ENCODE measurements at regions of chr2 and their contacts with region 1.

Region 1: DNA sequence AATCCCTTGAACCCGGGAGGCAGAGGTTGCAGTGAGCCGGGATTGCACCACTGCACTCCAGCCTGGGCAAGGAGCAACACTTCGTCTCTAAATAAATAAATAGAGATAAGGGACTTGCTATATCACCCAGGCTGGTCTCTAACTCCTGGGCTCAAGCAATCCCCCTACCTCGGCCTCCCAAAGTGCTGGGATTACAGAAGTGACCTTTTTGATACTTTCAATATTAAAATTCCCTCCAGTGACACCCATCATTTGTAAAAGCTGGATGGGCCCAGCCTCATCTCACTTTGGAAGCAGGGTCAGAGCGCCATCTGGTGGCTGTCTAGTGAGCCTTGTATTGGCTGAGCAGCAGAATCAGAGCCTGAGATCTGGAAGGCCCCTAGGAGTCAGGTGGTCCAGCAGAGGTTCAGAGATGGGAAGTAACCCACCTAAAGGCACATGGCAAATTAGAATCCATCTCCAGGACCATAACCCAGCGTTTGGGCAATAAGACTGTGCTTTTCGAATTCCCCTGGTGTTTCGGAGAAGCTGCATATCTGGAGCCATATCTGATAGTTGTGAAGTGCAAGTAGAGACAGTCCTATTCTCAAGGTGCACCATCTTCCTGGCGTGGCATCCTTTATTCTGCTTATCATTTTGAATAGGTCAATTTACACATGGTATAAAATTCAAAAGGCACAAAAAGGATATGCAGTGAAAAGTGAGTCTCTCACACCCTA is 18.3 kb upstream of the SLC35F6 start:
- DNase-seq: peak; percentile 86
- H3K4me3 ChIP-seq: no peak overlapping the region
- H3K27ac ChIP-seq: no peak overlapping the region
- H3K4me1 ChIP-seq: peaks cover 14% of the 10 kb centered on the region
- H3K27me3 ChIP-seq: no peaks in the 10 kb centered on the region
- CTCF ChIP-seq: peak; percentile 93

Region 2: DNA sequence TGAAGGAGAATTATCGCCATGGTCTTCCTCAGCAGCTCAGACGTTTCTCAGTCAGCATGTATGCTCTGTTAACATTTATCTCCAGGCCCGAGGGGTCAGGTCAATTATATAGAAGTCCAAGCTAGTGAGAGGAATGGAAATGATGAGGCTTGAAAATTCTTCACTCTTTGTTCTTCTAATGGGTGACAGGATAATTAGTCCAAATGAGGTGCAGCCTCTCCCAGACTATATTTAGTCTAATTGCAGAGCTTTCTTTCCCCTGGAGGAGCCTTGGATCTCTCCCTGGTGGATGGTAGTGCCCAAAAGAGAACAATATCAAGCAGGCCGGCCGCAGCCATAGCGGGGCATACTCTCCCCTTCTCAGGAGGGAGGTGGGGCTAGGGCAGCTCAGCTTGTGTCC is 1021.0 kb before region 1 on chr2:
- CTCF ChIA-PET with region 1: no interaction called
- POLR2A ChIA-PET with region 1: interaction called, 11 read pairs
- intact Hi-C with region 1: no loop called
- DNase-seq: no peak
- H3K4me3 ChIP-seq: no peak overlapping the region
- H3K27ac ChIP-seq: no peak overlapping the region
- H3K4me1 ChIP-seq: no peaks in the 10 kb centered on the region
- H3K27me3 ChIP-seq: no peaks in the 10 kb centered on the region
- CTCF ChIP-seq: no peak

Region 3: DNA sequence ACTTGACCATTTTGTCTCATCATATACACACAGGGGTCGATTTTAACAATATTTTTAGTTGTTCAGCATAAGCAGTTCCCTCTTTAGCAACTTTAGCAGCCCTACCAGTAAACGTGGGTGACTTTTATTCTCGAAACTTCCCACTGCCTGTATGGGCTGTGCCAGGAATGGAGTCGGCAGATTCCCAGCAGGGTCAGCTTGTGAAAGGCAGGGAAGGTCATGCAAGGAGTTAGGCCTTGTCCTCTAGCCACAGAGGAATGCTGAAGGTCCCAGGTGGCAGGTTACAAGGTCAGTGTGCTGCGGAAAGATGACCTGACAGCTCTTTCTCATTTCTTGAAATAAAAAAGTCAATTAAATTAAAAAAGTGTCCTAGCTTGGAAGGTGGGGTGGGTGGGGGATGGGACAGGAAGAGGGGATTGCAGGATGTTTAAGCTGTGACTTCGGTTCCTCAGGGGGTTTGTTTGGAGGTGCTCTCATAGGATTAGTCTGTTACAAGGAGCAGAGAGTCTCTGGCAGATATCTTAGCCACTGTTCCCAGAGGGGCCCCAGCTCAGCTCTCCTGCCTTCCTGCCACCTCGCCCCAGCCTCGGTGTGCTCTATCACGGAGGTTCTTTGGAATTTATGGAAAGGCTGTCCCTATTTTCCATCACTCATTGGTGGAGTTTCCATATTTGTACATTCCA is 322.7 kb before region 1 on chr2:
- CTCF ChIA-PET with region 1: interaction called, 10 read pairs
- POLR2A ChIA-PET with region 1: no interaction called
- intact Hi-C with region 1: no loop called
- DNase-seq: no peak
- H3K4me3 ChIP-seq: no peak overlapping the region
- H3K27ac ChIP-seq: no peak overlapping the region
- H3K4me1 ChIP-seq: no peaks in the 10 kb centered on the region
- H3K27me3 ChIP-seq: no peaks in the 10 kb centered on the region
- CTCF ChIP-seq: no peak

Region 4: DNA sequence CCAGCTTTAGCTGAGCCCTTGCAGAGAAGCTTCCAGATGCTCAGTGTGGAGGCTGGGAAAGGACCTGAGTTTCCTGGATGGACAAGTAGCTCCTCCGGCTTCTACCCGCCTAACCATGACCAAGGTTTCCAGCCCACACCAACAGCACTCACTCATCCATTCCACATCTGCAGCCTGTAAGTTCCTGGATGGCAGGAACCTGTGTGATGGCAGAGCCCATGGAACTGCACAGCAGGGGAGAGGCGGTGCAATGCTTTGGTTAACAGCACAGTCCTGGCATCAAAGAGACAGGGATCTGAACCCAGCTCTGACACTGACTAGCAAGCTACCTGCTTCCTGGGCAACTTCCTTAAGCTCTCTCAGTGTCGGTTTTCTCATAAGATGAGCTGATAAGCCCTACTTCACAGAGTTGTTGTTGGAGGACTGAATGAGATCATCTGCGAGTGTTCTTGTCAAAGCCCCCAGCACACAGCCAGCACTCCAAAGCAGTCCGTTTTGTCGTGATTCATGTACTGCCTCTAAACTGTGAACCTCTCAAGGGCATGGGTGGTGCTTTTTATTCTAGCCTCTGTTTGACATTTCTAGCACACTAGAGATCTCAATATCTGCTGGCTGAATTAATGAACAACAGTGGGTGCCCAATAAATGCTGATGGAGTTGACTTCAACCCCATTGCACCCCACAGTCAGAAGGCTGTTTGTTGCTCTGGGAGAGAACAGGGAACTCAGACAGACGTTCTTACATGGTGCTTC is 226.2 kb before region 1 on chr2:
- CTCF ChIA-PET with region 1: no interaction called
- POLR2A ChIA-PET with region 1: no interaction called
- intact Hi-C with region 1: no loop called
- DNase-seq: no peak
- H3K4me3 ChIP-seq: no peak overlapping the region
- H3K27ac ChIP-seq: no peak overlapping the region
- H3K4me1 ChIP-seq: no peaks in the 10 kb centered on the region
- H3K27me3 ChIP-seq: peaks cover 27% of the 10 kb centered on the region
- CTCF ChIP-seq: no peak

Region 5: DNA sequence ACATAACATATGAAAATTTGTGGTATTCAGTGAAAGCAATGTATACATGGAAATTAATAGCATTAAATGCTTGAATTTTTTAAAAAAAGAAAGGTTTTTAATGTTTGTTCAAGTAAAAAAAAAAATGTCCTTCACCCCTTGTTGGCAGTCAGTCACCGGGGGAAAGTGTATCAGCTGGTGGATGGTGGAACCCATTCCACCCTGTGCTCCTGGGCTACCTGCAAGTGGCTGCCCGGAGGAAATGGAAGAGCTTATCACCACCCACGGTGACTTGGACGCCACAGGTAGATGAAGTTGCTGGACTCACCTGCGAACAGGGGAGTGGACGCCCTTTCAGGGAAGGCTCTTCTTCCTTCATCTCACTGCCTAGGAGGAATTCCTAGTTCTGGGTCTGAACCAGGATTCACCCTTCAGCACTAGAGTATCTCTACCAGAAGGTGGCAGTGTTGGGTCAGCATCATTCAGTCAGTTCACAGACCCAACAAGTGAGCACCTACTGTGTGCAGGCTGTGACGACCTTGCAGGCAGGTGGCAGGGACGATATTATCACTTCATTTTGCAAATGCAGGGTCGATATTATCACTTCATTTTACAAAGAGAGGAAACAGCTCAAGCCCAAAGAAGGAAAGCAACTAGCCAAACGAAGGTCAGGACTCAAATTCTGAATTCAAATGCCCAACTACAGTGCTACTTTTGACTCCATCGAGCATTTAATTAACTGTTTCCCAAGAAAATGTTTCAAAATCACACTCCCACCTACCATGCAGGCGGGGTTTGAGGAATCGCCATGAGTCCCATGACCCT is 140.4 kb before region 1 on chr2:
- CTCF ChIA-PET with region 1: interaction called, 22 read pairs
- POLR2A ChIA-PET with region 1: no interaction called
- intact Hi-C with region 1: loop called (anchors 1 kb)
- DNase-seq: peak; percentile 62
- H3K4me3 ChIP-seq: no peak overlapping the region
- H3K27ac ChIP-seq: no peak overlapping the region
- H3K4me1 ChIP-seq: no peaks in the 10 kb centered on the region
- H3K27me3 ChIP-seq: no peaks in the 10 kb centered on the region
- CTCF ChIP-seq: peak; percentile 92

Region 6: GRCh38 chr2:26870585-26871095 is 124.9 kb after region 1 on chr2:
- CTCF ChIA-PET with region 1: no interaction called
- POLR2A ChIA-PET with region 1: no interaction called
- intact Hi-C with region 1: no loop called
- DNase-seq: no peak
- H3K4me3 ChIP-seq: no peak overlapping the region
- H3K27ac ChIP-seq: no peak overlapping the region
- H3K4me1 ChIP-seq: peaks cover 11% of the 10 kb centered on the region
- H3K27me3 ChIP-seq: no peaks in the 10 kb centered on the region
- CTCF ChIP-seq: no peak

Measured in A673 (cell line).